Gastrocnemius medialis (tissue), 4 donors: ENCODE measurements at regions of chr2 and their contacts with region 1.

Region 1: DNA sequence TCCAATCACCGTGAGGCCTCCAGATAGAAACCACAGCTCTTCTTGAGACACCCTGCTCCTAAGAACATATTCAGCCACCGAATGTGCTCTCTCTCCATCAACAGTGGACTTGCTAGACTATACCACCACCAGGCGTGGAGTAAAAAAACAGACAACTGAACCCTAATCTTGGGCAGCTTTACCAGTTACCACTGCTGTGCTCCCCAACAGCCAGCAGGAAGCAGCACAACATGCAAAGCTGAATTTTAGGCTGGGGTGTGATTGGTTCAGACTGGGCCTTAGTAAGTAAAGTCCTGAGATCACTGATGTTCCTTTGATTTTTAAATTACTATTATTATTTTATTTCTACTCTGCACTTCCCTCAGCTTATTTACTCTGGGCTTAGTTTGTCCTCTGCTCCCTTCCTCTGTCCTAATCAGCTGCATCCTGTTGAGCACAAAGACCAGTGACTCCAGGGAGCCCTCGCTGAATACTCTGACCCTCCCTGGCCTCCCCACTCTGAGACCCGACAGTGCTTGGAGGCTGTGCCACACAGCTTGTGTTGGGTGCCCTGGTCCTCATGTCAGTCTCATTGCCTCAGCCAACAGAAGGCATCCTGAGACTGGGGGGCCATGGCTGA is 21.9 kb downstream of the MRPL35 start:
- DNase-seq: no peak
- ATAC-seq: peak; percentile 14 to 61
- H3K4me3 ChIP-seq: no peak overlapping the region
- H3K27ac ChIP-seq: peak overlapping the region in 1 of 4 donors; percentile 5
- H3K4me1 ChIP-seq: peaks cover 36 to 45% of the 10 kb centered on the region in 2 donors
- H3K27me3 ChIP-seq: no peaks in the 10 kb centered on the region
- CTCF ChIP-seq: peak; percentile 72 to 95 (median 89)
- POLR2A ChIP-seq: no peak

Region 2: GRCh38 chr2:86011449-86011941 is 209.7 kb before region 1 on chr2:
- in situ Hi-C with region 1: no loop called
- intact Hi-C with region 1: no loop called
- DNase-seq: no peak
- ATAC-seq: no peak
- H3K4me3 ChIP-seq: no peak overlapping the region
- H3K27ac ChIP-seq: peak overlapping the region in 1 of 4 donors; percentile 8
- H3K4me1 ChIP-seq: peaks cover 0 to under 1% of the 10 kb centered on the region in 2 donors
- H3K27me3 ChIP-seq: no peaks in the 10 kb centered on the region
- CTCF ChIP-seq: no peak
- POLR2A ChIP-seq: no peak

Region 3: DNA sequence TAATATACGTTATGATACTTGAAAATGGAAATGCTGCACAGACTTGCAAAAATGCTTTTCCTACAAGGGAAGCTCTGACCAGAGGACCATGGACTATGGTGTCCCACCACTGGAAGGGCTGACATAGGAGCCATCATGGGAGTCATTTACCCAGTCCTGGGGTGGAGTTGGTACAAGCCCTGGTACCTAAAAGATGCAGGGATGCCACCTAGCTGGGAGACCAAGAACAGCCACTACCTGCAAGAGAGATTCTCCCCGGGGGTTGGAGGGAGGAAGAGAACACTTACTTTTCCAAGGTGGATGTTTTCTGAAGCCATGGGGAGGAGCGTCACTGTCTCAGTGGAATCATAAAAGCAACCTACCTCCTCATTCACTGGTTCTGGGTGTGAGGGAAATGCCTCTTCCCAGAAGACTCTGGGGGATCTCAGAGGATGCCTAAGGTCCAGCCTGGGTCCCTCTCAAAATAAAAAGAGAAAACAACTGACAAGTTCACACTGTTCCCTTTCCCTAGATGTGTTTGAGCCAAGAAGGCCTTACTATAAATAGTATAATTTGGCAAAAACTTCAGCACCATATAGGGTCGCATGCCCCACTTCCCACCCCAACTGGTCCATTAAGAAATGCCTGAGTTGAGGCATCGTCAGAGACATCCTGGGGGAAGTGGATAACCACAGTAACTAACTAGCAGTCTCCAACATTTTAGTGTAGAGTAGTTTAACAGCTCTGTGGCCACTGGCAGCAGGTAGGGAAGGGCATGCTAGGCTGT is 76.4 kb after region 1 on chr2:
- in situ Hi-C with region 1: no loop called
- intact Hi-C with region 1: loop called (anchors 2 kb)
- DNase-seq: no peak
- ATAC-seq: peak; percentile 48 to 50
- H3K4me3 ChIP-seq: no peak overlapping the region
- H3K27ac ChIP-seq: peak overlapping the region in 3 of 4 donors; percentile 8 to 56 (median 38)
- H3K4me1 ChIP-seq: peaks cover 44 to 47% of the 10 kb centered on the region in 2 donors
- H3K27me3 ChIP-seq: no peaks in the 10 kb centered on the region
- CTCF ChIP-seq: peak in 2 of 5 experiments; percentile 27 to 38
- POLR2A ChIP-seq: no peak

Region 4: GRCh38 chr2:86368161-86368824 is 147.1 kb after region 1 on chr2:
- in situ Hi-C with region 1: loop called in 3 of 4 experiments (anchors 5 to 10 kb)
- intact Hi-C with region 1: loop called (anchors 1 kb)
- DNase-seq: no peak
- ATAC-seq: peak; percentile 42 to 51
- H3K4me3 ChIP-seq: peak overlapping the region in 1 of 4 donors; percentile 18
- H3K27ac ChIP-seq: no peak overlapping the region
- H3K4me1 ChIP-seq: no peaks in the 10 kb centered on the region
- H3K27me3 ChIP-seq: no peaks in the 10 kb centered on the region
- CTCF ChIP-seq: peak; percentile 42 to 72 (median 55)
- POLR2A ChIP-seq: no peak

Region 5: DNA sequence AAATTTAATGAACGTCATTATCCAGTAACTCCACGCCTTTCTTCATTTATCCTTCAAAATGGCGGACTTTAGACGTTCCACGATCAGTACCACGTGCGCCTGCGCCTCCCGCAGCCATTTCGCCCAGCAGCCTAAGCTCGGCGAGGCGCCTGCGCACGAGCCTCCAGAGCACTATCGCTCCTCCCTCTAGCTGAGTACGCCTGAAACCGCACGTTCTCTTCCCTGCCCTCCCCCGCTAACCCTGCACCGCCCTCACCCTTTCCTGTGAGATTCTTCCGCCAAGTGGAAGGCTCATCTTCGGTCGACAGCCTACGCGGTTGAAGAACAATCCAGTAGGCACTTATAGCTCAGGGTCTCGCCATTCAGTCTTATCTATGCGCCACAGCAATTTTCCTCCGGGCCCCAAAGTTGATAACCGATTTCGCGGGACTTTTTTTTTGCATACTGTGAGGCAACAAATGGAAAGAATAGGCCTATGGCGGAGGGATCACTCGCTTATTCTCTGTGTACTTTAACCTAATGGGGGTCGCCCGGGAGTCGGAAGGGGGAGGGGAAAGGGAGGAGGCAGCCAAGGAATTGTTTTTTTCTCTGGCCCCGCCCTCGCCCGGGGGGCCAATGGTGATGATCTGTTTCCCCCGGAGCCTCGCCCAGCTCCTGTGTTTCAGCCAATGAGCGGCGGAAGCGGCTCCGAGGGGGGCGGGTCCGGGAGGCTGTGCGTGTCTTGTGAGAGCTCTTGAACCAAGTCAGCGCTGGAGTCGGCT is 219.6 kb after region 1 on chr2 and contains the start of gene KDM3A:
- in situ Hi-C with region 1: no loop called
- intact Hi-C with region 1: loop called (anchors 10 kb)
- DNase-seq: peak; percentile 99
- ATAC-seq: peak; percentile 84 to 86
- H3K4me3 ChIP-seq: peak within 1 kb of the TSS; percentile 74 to 81 (median 76)
- H3K27ac ChIP-seq: peak within 1 kb of the TSS; percentile 86 to 98 (median 91)
- H3K4me1 ChIP-seq: peaks cover 31 to 33% of the 10 kb centered on the region in 2 donors
- H3K27me3 ChIP-seq: no peaks in the 10 kb centered on the region
- CTCF ChIP-seq: peak in 1 of 5 experiments; percentile 5
- POLR2A ChIP-seq: no peak
- total RNA-seq, gene KDM3A: 20.7 to 36.8 (median 26.1) TPM

Region 6: DNA sequence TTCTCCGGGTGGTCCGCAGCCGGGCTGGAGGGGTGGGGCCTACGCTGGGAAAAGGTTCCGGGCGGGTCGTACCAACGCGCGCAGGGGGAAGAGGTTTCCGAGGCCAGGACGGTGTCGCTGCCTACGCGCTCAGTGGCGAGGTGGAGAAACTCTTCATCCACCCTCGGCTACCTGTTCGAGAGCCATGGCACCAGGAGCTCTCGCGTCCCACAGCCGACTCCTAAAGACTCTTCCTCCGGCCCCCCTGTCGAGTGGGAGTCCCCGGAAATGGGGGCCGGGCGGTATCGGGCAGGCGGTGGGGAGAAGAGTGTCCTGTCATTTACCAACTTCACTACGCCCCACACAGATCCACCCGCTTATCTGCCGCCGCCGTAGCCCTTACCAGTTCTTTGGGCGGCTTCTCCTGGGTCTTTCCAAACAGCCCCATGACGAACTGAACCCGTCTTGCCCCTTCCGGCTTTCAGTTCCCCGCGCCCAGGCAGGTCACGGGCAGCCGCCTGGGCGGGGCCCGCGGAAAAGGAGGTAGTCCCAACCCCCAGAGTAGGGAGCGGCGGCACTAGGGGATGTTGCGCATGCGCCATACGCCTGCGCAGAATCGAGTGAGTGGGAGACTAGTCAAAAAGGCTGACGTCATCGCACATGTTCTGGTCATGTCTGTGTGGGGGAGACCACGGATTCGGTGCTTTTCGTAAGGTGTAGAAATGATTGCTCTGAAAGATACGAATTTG is 341.9 kb after region 1 on chr2 and contains the start of gene CHMP3:
- in situ Hi-C with region 1: loop called in 1 of 4 experiments (anchors 25 kb)
- intact Hi-C with region 1: no loop called
- DNase-seq: peak; percentile 92 to 95
- ATAC-seq: peak; percentile 95
- H3K4me3 ChIP-seq: peak within 1 kb of the TSS; percentile 81 to 90 (median 86)
- H3K27ac ChIP-seq: peak within 1 kb of the TSS; percentile 97 to 99 (median 99)
- H3K4me1 ChIP-seq: peaks cover 18 to 23% of the 10 kb centered on the region in 2 donors
- H3K27me3 ChIP-seq: no peaks in the 10 kb centered on the region
- CTCF ChIP-seq: peak in 1 of 5 experiments; percentile 19
- POLR2A ChIP-seq: peak; percentile 72 to 75
- total RNA-seq, gene CHMP3: 64.0 to 99.1 (median 71.5) TPM